Ascending aorta (tissue), 2 donors: ENCODE measurements at regions of chr9 and their contacts with region 1.

Region 1: GRCh38 chr9:91193658-91194391 is 167.9 kb downstream of the AUH start:
- DNase-seq: peak in 1 of 2 donors; percentile 95
- H3K4me3 ChIP-seq: peak overlapping the region; percentile 44 to 66
- H3K27ac ChIP-seq: peak overlapping the region; percentile 98 to 99
- H3K4me1 ChIP-seq: peaks cover 6 to 29% of the 10 kb centered on the region in 2 donors
- H3K27me3 ChIP-seq: no peaks in the 10 kb centered on the region
- CTCF ChIP-seq: no peak

Region 2: DNA sequence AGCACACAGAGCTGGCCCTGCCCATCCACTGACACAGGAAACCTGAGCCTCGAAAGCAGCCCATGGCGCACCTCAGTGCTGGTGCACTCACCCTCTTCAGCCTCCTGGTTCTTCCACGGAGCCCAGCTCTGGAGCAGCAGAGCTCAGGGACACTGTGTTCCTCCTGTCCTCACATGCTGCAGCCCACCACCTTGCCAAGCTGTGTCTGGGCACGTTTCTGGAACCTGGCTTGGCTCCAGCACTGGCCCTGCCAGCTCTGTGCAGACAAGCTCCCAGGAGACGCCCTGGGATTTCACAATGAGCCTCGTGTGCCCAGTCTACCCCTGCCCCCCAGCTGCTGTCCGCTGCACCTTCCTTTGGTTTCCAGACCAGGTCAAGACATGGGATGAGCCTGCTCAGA is 272.7 kb before region 1 on chr9:
- intact Hi-C with region 1: loop called (anchors 1 kb)
- DNase-seq: peak; percentile 70 to 95
- H3K4me3 ChIP-seq: no peak overlapping the region
- H3K27ac ChIP-seq: peak overlapping the region; percentile 77 to 80
- H3K4me1 ChIP-seq: peaks cover 6 to 25% of the 10 kb centered on the region in 2 donors
- H3K27me3 ChIP-seq: no peaks in the 10 kb centered on the region
- CTCF ChIP-seq: no peak

Region 3: DNA sequence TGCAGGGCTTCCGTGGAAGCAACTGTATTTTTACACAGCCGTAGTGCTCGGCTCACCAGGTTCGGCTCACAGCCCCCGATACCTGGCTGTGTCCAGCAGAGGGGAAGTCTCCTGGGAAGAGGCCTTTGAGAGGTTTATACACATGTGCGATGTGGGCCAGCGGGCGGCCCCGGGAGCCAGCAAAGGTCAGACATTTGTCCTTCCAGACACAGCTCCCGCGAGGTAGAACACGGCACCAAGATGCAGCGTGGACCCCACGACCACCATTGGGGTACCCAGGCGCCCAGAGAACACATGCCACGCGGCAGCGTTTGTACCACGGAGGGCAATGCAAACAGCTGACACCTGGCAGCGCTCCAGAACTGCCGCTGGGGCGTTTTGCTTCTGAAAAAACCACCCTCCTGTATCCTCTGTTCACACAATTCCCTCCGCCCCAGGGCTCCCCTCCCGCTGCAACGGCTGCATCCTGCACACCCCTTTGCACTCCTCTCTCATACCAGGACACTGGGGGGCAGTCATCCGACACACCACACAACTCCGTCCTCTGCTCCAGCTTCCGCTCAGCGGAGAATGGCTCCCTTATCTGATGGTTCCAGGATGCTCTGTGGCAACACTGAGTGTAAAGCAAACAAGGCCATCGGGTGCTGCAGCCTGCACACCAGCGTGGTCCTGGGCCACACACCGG is 156.9 kb before region 1 on chr9:
- intact Hi-C with region 1: loop called (anchors 5 kb)
- DNase-seq: peak; percentile 56 to 90
- H3K4me3 ChIP-seq: peak overlapping the region in 1 of 2 donors; percentile 34
- H3K27ac ChIP-seq: peak overlapping the region; percentile 30 to 59
- H3K4me1 ChIP-seq: peaks cover 10 to 18% of the 10 kb centered on the region in 2 donors
- H3K27me3 ChIP-seq: no peaks in the 10 kb centered on the region
- CTCF ChIP-seq: peak; percentile 60 to 65 (median 64)

Region 4: GRCh38 chr9:91117959-91118703 is 75.7 kb before region 1 on chr9:
- intact Hi-C with region 1: loop called (anchors 2 kb)
- DNase-seq: peak; percentile 58 to 93
- H3K4me3 ChIP-seq: peak overlapping the region; percentile 37 to 57
- H3K27ac ChIP-seq: peak overlapping the region; percentile 83 to 86
- H3K4me1 ChIP-seq: peaks cover 12 to 29% of the 10 kb centered on the region in 2 donors
- H3K27me3 ChIP-seq: no peaks in the 10 kb centered on the region
- CTCF ChIP-seq: no peak

Region 5: DNA sequence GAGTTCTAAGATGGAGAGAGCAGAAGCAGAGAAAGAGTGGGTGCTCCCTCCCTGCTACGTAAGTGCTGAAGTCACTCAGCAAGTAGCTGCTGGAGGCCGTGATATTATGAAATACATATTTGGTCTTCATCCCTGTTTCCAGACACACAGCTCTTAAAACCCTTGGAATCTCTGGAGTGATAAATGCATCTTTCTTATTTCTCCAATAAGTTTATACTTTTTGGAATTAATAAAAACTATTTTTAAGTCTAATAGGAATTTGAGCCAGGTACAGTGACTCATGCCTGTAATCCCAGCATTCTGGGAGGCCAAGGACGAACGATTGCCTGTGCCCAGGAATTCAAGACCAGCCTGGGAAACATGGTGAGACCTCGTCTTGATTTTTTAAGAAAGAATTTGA is 107.3 kb after region 1 on chr9:
- intact Hi-C with region 1: loop called (anchors 2 kb)
- DNase-seq: no peak
- H3K4me3 ChIP-seq: no peak overlapping the region
- H3K27ac ChIP-seq: peak overlapping the region; percentile 86
- H3K4me1 ChIP-seq: peaks cover 8 to 26% of the 10 kb centered on the region in 2 donors
- H3K27me3 ChIP-seq: no peaks in the 10 kb centered on the region
- CTCF ChIP-seq: no peak

Region 6: DNA sequence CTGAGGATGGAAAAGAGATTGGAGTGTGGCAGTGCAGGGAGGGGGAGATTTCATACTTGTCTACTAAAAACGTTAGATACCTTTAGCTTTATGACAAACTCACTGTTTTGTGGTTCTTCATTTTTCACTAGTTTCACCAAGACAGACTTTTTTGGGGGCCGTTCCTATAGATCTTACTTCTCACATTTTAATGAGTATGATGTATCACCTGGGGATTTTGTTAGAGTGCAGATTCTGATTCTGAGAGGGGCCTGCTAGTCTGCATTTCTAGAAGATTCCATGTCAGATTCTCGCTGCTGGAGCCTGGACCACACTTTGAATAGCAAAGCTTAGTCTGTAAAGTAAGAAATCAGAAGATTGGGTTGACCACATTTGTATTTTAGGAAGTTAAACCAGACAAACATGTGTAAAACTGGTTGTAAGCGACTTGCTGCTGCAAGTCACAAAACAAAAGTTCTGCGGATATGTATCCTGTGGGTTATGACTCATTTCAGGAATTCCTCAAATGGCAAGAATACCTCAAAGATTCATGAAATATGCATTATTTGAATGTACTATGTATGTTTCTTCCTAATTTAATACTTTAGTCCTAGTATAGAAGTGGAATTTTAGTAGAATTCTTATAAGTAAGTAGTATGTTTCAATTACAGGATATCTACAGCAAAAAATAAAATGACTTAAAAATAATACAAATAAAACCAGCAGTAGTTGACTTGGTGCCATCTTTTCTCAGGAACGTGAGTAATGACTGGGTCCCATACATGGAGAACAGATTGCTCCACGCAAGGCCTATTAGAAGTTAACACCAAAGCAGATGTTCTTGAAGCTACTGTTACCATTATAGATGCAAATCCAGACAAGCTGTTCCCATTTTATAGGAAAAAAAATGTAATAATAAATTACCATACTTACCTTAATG is 202.0 kb after region 1 on chr9:
- intact Hi-C with region 1: no loop called
- DNase-seq: no peak
- H3K4me3 ChIP-seq: no peak overlapping the region
- H3K27ac ChIP-seq: no peak overlapping the region
- H3K4me1 ChIP-seq: no peaks in the 10 kb centered on the region
- H3K27me3 ChIP-seq: no peaks in the 10 kb centered on the region
- CTCF ChIP-seq: no peak

Region 7: DNA sequence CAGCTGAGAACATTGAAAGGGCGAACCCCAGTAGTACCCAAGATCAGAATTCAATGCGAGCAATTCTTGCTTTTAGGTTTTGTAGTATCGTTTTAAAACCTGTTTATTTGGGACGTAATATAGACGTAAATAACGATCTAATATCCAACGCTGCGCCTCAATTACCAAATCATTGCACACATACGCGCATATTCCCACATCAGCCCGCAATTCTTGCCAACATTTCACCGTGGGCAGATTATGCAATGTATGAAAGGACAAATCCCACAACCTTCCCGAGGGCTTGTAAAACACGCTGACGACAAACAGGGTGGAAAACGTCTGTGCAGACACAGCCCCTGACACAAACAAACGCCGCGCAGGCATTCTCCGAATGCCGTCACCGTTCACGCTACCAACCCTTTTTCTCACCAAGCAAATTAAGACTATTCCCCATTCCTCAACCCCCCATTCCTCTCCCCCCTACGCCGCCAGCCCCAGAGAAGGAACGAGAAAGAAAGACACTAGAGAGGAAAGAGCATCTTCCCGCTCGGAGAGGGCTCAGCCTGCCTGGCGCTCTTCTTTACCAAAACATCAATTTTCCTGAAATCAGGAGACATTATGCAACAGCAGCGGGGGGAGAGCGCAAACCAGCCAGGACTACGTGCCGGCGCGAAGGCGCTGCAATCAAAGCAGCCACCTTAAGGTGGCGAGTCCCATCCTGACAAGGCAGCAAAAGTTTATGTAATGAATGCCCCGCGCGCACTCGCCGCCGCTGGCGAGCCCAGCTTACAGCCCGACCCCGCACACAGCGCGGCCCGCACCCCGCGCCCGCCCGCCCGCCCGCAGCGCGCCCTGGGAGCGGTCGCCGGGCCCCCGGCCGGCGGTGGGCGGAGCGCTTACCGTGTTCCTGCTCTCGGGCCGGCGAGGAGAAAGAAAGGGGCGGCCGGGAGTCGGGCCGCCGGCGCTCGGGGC is 229.2 kb after region 1 on chr9:
- intact Hi-C with region 1: loop called (anchors 1 kb)
- DNase-seq: peak; percentile 40 to 88
- H3K4me3 ChIP-seq: peak overlapping the region; percentile 83 to 86
- H3K27ac ChIP-seq: peak overlapping the region; percentile 94 to 95
- H3K4me1 ChIP-seq: peaks cover 0 to 22% of the 10 kb centered on the region in 2 donors
- H3K27me3 ChIP-seq: no peaks in the 10 kb centered on the region
- CTCF ChIP-seq: peak in 1 of 3 experiments; percentile 13